Posterior vena cava (tissue), 2 donors: ENCODE measurements at regions of chr22 and their contacts with region 1.

Region 1: DNA sequence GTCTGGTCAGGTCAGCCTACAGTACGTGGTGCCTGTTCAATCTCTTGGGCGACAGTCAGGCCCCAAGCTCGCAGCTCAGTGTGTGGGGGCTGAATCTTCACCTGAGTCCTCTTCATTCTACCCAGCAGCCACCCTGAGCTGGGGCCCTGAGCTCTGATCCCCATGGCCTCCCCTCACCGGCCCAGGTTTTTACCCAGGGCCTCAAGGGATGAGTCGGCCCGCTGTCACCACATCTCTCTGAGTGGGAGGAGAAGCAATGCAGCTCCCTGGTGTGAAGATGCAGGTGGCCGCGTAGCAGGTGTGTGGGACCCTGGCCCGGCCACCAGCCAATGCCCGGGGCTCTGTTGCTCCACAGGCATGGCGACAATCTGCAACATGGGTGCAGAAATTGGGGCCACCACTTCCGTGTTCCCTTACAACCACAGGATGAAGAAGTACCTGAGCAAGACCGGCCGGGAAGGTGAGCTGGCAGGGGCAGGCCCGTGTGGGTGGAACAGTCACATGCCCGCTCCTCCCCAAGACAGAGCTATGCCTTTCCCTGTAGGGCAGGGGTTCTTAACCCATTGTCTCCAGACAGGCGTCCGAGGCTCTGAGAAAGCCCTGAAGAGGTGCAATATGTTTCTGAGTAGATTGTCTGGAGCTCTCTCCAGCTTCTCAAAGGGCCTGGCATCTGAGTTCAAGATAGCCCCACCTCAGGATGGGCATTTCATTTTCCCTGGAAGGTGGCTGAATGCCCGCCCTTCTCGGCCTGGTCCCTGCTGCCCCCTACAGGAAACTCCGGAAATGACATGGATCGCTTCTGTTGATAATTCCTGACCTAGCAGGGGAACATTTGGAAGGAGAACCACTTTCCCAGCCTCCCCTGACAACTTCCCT is 26.9 kb downstream of the POLR3H start:
- DNase-seq: no peak

Region 2: GRCh38 chr22:41403532-41404318 is 113.7 kb before region 1 on chr22:
- intact Hi-C with region 1: loop called in 1 of 2 experiments (anchors 5 kb)
- DNase-seq: peak; percentile 97

Region 3: GRCh38 chr22:41479671-41480396 is 37.6 kb before region 1 on chr22:
- intact Hi-C with region 1: loop called in 1 of 2 experiments (anchors 5 kb)
- DNase-seq: peak; percentile 29